Mammary epithelial cell (primary cell): ENCODE measurements at regions of chr1 and their contacts with region 1.

Region 1: GRCh38 chr1:11037740-11038182 is 9.3 kb downstream of the MASP2 start:
- DNase-seq: peak; percentile 68
- H3K4me3 ChIP-seq: no peak overlapping the region
- H3K27ac ChIP-seq: no peak overlapping the region
- H3K4me1 ChIP-seq: no peaks in the 10 kb centered on the region
- H3K27me3 ChIP-seq: no peaks in the 10 kb centered on the region
- CTCF ChIP-seq: peak; percentile 98 to 99

Region 2: GRCh38 chr1:10745886-10746455 is 291.8 kb before region 1 on chr1:
- CTCF ChIA-PET with region 1: no interaction called
- dilution Hi-C with region 1: no loop called
- in situ Hi-C with region 1: no loop called
- intact Hi-C with region 1: no loop called
- DNase-seq: no peak
- H3K4me3 ChIP-seq: no peak overlapping the region
- H3K27ac ChIP-seq: no peak overlapping the region
- H3K4me1 ChIP-seq: no peaks in the 10 kb centered on the region
- H3K27me3 ChIP-seq: no peaks in the 10 kb centered on the region
- CTCF ChIP-seq: no peak

Region 3: DNA sequence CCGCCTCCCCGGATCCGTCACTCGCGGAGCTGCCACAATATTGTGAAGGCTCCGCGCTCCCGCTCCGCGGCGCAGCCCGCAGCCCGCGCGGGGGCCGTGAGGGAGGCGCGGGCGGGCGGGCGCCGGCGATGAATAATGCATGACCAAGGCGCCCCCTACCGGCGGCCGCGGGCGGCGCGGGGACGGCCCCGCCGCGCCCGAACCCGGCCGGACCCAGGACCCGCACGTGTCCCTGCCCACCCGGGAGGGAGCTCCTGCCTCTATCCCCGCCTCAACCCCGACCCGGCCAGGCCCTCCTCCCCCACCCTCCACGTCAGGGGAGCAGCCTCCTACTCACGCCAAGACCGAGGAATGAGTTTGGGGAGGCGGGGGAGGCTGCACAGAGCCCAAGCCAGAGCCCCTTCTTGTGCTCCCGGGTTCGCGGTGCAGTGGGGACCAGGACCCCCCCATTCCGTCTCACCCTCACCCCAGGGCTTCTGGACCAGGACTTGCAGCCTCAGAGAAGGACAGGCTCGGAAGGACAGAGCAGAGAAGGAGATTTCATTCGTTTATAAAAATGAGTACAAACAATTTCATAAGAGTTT is 170.5 kb before region 1 on chr1:
- CTCF ChIA-PET with region 1: no interaction called
- dilution Hi-C with region 1: no loop called
- in situ Hi-C with region 1: no loop called
- intact Hi-C with region 1: no loop called
- DNase-seq: no peak
- H3K4me3 ChIP-seq: peak overlapping the region; percentile 32 to 49 (median 47)
- H3K27ac ChIP-seq: no peak overlapping the region
- H3K4me1 ChIP-seq: peaks cover 10% of the 10 kb centered on the region
- H3K27me3 ChIP-seq: no peaks in the 10 kb centered on the region
- CTCF ChIP-seq: peak in 1 of 2 donors; percentile 28

Region 4: DNA sequence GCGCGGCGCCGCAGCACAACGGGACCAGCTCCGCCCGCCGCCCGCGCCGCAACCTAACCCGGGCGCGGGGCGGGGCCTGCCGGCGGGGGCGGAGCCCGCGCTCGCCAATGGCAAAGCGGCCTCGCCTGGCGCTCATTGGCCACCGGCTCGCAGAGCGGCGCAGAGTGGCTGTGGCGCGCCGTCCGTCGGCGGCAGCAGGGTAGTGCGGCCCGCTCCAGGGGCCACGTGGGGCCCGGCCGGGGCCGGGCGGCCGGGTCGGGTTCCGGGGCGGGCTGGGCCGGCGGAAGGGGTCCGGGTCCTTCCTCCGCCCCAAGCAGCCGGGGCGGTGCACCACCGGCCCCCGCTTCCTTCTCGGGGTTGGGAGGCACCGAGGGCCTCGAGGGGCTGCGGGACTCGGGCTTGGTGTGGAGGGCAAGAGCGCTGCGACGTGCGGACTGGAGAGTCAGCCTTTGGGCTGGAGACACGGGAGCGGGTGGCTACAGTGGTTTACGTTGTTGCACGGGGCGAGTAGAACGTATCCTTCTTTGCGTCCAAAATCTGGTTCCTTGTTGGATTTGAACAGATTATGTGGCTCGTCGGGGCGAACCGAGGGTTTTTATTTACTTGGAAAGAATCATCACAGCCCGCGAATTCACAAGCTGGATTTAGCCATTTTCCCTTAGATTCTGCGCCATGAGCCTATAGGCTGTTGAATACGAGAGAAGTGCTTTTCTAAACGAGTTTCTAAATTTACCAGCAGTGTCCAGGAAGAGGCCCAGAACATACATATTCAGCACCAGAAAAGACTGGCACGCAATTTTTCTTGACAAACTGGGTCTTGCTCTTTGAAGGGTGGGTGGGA is 22.4 kb after region 1 on chr1 and contains the start of gene SRM:
- CTCF ChIA-PET with region 1: no interaction called
- dilution Hi-C with region 1: no loop called
- in situ Hi-C with region 1: no loop called
- intact Hi-C with region 1: loop called (anchors 2 kb)
- DNase-seq: peak; percentile 90
- H3K4me3 ChIP-seq: peak within 1 kb of the TSS; percentile 92 to 99 (median 97)
- H3K27ac ChIP-seq: peak within 1 kb of the TSS; percentile 55
- H3K4me1 ChIP-seq: peaks cover 12% of the 10 kb centered on the region
- H3K27me3 ChIP-seq: no peaks in the 10 kb centered on the region
- CTCF ChIP-seq: peak in 1 of 2 donors; percentile 45
- total RNA-seq, gene SRM: 32.3 to 187 TPM

Region 5: GRCh38 chr1:11132563-11133292 is 95.0 kb after region 1 on chr1:
- CTCF ChIA-PET with region 1: no interaction called
- dilution Hi-C with region 1: no loop called
- in situ Hi-C with region 1: no loop called
- intact Hi-C with region 1: no loop called
- DNase-seq: no peak
- H3K4me3 ChIP-seq: no peak overlapping the region
- H3K27ac ChIP-seq: no peak overlapping the region
- H3K4me1 ChIP-seq: peaks cover 19% of the 10 kb centered on the region
- H3K27me3 ChIP-seq: no peaks in the 10 kb centered on the region
- CTCF ChIP-seq: no peak

Region 6: DNA sequence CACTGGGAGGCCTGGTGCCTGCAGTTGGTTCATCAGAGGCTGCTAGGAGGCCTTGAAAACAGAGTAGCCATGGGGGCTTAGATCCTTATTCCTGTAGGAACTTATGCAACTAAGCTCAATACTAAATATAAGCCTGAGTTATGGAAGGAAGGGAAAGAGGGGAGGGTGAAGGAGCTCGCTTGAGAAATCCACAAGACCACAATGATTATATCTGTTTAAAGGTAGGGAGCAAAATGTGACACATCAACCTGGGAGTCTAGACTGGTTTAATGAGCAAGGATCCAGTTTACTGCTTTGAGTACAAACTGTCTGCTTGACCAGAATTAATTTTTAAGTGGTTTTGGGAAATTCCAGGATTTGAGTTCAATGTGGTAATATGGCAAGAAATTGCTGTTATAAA is 131.0 kb after region 1 on chr1:
- CTCF ChIA-PET with region 1: no interaction called
- dilution Hi-C with region 1: no loop called
- in situ Hi-C with region 1: no loop called
- intact Hi-C with region 1: no loop called
- DNase-seq: peak; percentile 35
- H3K4me3 ChIP-seq: no peak overlapping the region
- H3K27ac ChIP-seq: no peak overlapping the region
- H3K4me1 ChIP-seq: peaks cover 3% of the 10 kb centered on the region
- H3K27me3 ChIP-seq: no peaks in the 10 kb centered on the region
- CTCF ChIP-seq: no peak

Region 7: DNA sequence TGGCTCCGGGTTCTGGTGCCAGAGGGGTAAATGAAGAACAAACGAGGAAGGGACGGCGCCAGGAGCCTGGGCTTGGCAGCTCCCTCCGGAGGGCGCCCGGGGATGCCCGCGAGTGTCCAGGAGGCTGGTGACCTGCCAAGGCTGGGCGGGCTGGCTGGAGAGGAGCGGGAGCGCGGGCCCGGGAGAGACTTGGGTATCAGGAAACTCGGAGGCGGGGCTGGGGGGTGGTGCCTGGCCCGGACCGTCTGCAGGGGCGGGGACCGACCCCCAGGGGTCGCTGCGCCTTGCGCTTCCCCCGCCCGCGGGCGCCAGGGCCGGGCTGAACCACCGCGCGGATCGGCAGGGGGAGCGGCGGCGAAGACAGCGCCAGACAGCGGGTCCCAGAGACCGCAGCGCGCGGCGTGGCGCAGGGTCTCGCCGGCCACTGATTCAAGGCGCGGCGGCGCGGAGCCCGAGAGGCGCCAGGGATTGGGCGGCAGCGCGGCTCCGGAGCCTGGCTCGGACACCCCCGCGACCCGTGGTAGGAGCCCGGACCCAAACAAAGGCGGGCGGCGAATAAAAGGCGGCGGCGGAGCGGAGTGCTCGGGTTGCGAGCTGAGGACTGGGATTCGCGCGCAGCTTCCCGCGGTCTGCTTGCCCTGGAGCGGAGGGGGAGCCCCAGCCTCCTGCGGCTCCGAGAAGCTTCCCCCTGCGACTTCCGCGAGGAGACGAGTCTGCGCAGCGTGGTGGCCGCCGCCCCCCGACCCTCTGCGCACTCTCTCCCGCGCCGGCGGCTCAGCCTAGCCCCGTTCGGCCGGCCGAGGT is 441.0 kb after region 1 on chr1 and contains the start of gene DISP3:
- CTCF ChIA-PET with region 1: no interaction called
- dilution Hi-C with region 1: no loop called
- in situ Hi-C with region 1: no loop called
- intact Hi-C with region 1: loop called (anchors 10 kb)
- DNase-seq: peak; percentile 63
- H3K4me3 ChIP-seq: peak within 1 kb of the TSS; percentile 48 to 60 (median 54)
- H3K27ac ChIP-seq: no peak within 1 kb of the TSS
- H3K4me1 ChIP-seq: peaks cover 6% of the 10 kb centered on the region
- H3K27me3 ChIP-seq: peaks cover 10% of the 10 kb centered on the region
- CTCF ChIP-seq: peak; percentile 43 to 56
- total RNA-seq, gene DISP3: under 0.01 to 0.14 TPM

Region 8: GRCh38 chr1:11708554-11709350 is 671.0 kb after region 1 on chr1:
- CTCF ChIA-PET with region 1: no interaction called
- dilution Hi-C with region 1: no loop called
- in situ Hi-C with region 1: no loop called
- intact Hi-C with region 1: loop called (anchors 1 kb)
- DNase-seq: no peak
- H3K4me3 ChIP-seq: no peak overlapping the region
- H3K27ac ChIP-seq: no peak overlapping the region
- H3K4me1 ChIP-seq: no peaks in the 10 kb centered on the region
- H3K27me3 ChIP-seq: peaks cover 6% of the 10 kb centered on the region
- CTCF ChIP-seq: no peak

Region 9: DNA sequence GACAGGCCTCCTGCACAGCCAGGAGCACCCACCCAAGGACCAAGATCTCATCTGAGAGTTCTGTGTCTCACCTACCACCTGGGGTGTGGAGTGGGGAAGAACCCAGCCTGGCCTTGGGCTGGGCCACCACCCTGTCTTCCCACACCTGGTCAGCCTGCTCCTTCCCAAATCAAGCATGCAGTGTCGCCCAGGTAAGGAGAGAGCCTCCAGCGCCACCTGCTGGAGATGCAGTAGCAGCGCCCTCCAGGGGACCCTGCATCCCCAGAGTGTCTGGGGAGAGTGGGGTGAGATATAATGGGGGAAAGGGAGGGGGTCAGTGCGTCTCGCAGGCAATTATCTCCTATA is 856.1 kb after region 1 on chr1:
- CTCF ChIA-PET with region 1: no interaction called
- dilution Hi-C with region 1: no loop called
- in situ Hi-C with region 1: no loop called
- intact Hi-C with region 1: loop called (anchors 5 kb)
- DNase-seq: peak; percentile 42
- H3K4me3 ChIP-seq: no peak overlapping the region
- H3K27ac ChIP-seq: no peak overlapping the region
- H3K4me1 ChIP-seq: peaks cover 3% of the 10 kb centered on the region
- H3K27me3 ChIP-seq: peaks cover 7% of the 10 kb centered on the region
- CTCF ChIP-seq: peak; percentile 93 to 98

Region 10: DNA sequence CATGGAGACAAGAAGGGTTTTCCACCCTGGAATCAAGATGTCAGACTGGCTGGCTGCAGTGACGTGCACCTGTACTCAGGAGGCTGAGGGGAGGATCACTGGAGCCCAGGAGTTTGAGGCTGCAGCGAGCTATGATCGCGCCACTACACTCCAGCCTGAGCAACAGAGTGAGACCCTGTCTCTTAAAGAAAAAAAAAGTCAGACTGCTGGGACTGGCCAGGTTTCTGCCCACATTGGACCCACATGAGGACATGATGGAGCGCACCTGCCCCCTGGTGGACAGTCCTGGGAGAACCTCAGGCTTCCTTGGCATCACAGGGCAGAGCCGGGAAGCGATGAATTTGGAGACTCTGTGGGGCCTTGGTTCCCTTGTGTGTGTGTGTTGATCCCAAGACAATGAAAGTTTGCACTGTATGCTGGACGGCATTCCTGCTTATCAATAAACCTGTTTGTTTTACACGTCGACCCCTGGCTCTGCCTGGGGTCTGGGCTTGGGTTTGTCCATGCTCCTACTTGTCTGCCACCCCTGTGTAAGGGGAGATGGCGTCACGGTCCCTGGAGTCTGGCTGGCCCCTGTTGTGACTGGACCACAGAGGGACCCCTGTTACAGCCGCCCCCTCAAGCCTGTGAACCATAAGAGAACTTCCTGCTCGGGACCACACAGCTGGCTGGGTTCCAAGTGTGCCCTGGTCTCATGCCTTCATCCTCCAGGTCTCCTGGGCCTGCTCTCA is 1171.2 kb after region 1 on chr1:
- CTCF ChIA-PET with region 1: no interaction called
- dilution Hi-C with region 1: no loop called
- in situ Hi-C with region 1: no loop called
- intact Hi-C with region 1: loop called (anchors 5 kb)
- DNase-seq: peak; percentile 57
- H3K4me3 ChIP-seq: no peak overlapping the region
- H3K27ac ChIP-seq: no peak overlapping the region
- H3K4me1 ChIP-seq: peaks cover 8% of the 10 kb centered on the region
- H3K27me3 ChIP-seq: no peaks in the 10 kb centered on the region
- CTCF ChIP-seq: peak; percentile 90 to 93